ENCODE measurements at regions of chr17 and their contacts with region 1.

Region 1: GRCh38 chr17:409848-410545 is 57.4 kb upstream of the RPH3AL start:
- DNase-seq: peak; percentile 100
- ATAC-seq: peak; percentile 81 to 93
- H3K4me3 ChIP-seq: peak overlapping the region; percentile 70
- H3K27ac ChIP-seq: peak overlapping the region; percentile 76 to 90
- H3K4me1 ChIP-seq: peaks cover 21% of the 10 kb centered on the region
- CTCF ChIP-seq: no peak
- EP300 ChIP-seq: no peak
- POLR2A ChIP-seq: peak; percentile 95
- RAD21 ChIP-seq: no peak

Region 2: DNA sequence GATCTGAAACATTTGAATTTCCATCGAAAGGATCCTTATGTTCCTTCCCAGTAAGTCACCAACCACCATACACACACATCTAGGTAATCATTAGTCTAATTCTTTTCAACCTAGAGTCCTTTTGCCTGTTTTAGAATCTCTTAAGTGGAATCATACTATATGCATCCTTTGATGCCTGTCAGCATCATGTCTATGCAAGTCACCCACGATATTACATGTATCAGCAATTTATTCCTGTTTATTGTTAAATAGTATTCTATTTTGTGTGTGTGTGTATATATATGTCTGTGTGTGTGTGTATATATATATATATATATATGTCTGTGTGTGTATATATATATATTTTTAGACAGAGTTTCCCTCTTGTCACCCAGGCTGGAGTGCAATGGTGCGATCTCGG is 21.5 kb after region 1 on chr17:
- CTCF ChIA-PET with region 1: interaction called, 88 read pairs
- POLR2A ChIA-PET with region 1: no interaction called
- DNase-seq: no peak
- ATAC-seq: no peak
- H3K4me3 ChIP-seq: no peak overlapping the region
- H3K27ac ChIP-seq: no peak overlapping the region
- H3K4me1 ChIP-seq: no peaks in the 10 kb centered on the region
- CTCF ChIP-seq: no peak
- EP300 ChIP-seq: no peak
- POLR2A ChIP-seq: no peak
- RAD21 ChIP-seq: no peak

Region 3: GRCh38 chr17:444879-445454 is 35.0 kb after region 1 on chr17:
- CTCF ChIA-PET with region 1: interaction called, 15 read pairs
- POLR2A ChIA-PET with region 1: no interaction called
- DNase-seq: no peak
- ATAC-seq: no peak
- H3K4me3 ChIP-seq: no peak overlapping the region
- H3K27ac ChIP-seq: no peak overlapping the region
- H3K4me1 ChIP-seq: no peaks in the 10 kb centered on the region
- CTCF ChIP-seq: no peak
- EP300 ChIP-seq: no peak
- POLR2A ChIP-seq: no peak
- RAD21 ChIP-seq: no peak

Region 4: GRCh38 chr17:527247-527646 is 117.2 kb after region 1 on chr17:
- CTCF ChIA-PET with region 1: interaction called, 14 read pairs
- POLR2A ChIA-PET with region 1: no interaction called
- DNase-seq: no peak
- ATAC-seq: no peak
- H3K4me3 ChIP-seq: no peak overlapping the region
- H3K27ac ChIP-seq: no peak overlapping the region
- H3K4me1 ChIP-seq: no peaks in the 10 kb centered on the region
- CTCF ChIP-seq: no peak
- EP300 ChIP-seq: no peak
- POLR2A ChIP-seq: no peak
- RAD21 ChIP-seq: no peak

Region 5: GRCh38 chr17:673200-673681 is 263.2 kb after region 1 on chr17:
- CTCF ChIA-PET with region 1: interaction called, 13 read pairs
- POLR2A ChIA-PET with region 1: no interaction called
- DNase-seq: no peak
- ATAC-seq: no peak
- H3K4me3 ChIP-seq: no peak overlapping the region
- H3K27ac ChIP-seq: no peak overlapping the region
- H3K4me1 ChIP-seq: peaks cover 9% of the 10 kb centered on the region
- CTCF ChIP-seq: no peak
- EP300 ChIP-seq: no peak
- POLR2A ChIP-seq: no peak; the same call in 1 of the 2 replicates
- RAD21 ChIP-seq: no peak

Region 6: DNA sequence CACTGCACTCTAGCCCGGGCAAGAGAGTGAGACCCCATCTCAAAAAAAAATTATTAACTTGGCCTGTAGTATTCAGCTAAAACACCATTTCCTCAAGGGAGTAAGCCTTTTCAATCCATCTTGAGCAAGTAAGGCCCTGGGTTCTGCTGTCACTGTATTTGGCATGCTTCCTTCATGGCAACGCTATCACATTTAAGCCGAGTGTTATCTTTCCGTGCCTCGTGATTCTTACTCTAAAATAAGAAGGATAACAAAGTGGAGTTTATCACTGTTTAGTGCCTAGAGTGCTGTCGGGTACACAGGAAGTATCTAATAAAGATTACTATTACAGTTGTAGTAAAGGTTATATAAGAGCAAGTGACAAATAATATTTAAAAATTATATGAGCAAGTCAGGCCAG is 295.9 kb after region 1 on chr17:
- CTCF ChIA-PET with region 1: interaction called, 410 read pairs
- POLR2A ChIA-PET with region 1: interaction called, 7 read pairs
- DNase-seq: no peak
- ATAC-seq: no peak
- H3K4me3 ChIP-seq: no peak overlapping the region
- H3K27ac ChIP-seq: no peak overlapping the region
- H3K4me1 ChIP-seq: no peaks in the 10 kb centered on the region
- CTCF ChIP-seq: no peak
- EP300 ChIP-seq: no peak
- POLR2A ChIP-seq: no peak
- RAD21 ChIP-seq: no peak

Region 7: GRCh38 chr17:731644-732066 is 321.7 kb after region 1 on chr17:
- CTCF ChIA-PET with region 1: interaction called, 12 read pairs
- POLR2A ChIA-PET with region 1: no interaction called
- DNase-seq: no peak
- ATAC-seq: peak; percentile 58 to 64
- H3K4me3 ChIP-seq: peak overlapping the region; percentile 80
- H3K27ac ChIP-seq: peak overlapping the region; percentile 89 to 96
- H3K4me1 ChIP-seq: peaks cover 14% of the 10 kb centered on the region
- CTCF ChIP-seq: no peak
- EP300 ChIP-seq: no peak
- POLR2A ChIP-seq: no peak
- RAD21 ChIP-seq: no peak